ENCODE measurements at regions of chr12 and their contacts with region 1.

Region 1: DNA sequence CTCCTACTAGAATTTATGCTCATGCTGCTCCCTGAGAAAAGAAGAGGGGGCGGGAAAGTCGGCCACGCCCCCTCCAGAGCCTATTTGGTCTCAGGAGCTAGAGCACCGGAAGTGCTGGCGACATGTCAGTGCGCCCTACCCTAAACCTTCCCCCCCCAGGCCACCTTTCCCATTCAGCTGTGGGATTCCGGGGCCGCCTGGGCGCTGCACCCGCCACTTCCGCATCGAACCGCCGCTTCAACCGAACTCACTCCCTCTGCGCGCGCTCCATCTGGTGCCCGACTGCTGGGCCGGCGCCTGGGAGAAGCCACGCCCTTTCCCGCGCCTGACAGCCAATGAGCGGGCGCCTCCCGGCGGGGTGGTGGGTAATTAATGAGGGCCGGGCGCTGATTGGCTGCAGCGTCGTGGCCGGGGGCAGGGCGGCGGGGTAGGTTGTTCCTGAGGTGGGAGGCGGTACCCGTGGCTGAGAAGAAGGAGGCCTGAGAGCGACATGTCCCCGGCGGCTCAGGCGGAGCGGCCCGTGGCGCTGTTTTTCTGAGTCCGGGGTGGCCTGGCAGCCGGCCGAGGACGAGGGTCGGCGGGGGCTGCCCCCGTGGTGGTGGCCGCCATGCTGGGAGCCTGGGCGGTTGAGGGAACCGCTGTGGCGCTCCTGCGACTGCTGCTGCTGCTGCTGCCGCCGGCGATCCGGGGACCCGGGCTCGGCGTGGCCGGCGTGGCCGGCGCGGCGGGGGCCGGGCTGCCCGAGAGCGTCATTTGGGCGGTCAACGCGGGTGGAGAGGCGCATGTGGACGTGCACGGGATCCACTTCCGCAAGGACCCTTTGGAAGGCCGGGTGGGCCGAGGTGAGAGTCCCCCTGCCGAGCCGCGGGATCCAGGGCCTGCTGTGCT is at the start of gene MLEC:
- DNase-seq: peak; percentile 99
- ATAC-seq: peak; percentile 86
- H3K4me3 Mint-ChIP-seq: peak within 1 kb of the TSS; percentile 92
- H3K27ac Mint-ChIP-seq: peak within 1 kb of the TSS; percentile 85
- H3K4me1 Mint-ChIP-seq: peaks cover 46% of the 10 kb centered on the region
- H3K27me3 Mint-ChIP-seq: no peaks in the 10 kb centered on the region
- total RNA-seq, gene MLEC: 70.6 to 89.5 TPM

Region 2: DNA sequence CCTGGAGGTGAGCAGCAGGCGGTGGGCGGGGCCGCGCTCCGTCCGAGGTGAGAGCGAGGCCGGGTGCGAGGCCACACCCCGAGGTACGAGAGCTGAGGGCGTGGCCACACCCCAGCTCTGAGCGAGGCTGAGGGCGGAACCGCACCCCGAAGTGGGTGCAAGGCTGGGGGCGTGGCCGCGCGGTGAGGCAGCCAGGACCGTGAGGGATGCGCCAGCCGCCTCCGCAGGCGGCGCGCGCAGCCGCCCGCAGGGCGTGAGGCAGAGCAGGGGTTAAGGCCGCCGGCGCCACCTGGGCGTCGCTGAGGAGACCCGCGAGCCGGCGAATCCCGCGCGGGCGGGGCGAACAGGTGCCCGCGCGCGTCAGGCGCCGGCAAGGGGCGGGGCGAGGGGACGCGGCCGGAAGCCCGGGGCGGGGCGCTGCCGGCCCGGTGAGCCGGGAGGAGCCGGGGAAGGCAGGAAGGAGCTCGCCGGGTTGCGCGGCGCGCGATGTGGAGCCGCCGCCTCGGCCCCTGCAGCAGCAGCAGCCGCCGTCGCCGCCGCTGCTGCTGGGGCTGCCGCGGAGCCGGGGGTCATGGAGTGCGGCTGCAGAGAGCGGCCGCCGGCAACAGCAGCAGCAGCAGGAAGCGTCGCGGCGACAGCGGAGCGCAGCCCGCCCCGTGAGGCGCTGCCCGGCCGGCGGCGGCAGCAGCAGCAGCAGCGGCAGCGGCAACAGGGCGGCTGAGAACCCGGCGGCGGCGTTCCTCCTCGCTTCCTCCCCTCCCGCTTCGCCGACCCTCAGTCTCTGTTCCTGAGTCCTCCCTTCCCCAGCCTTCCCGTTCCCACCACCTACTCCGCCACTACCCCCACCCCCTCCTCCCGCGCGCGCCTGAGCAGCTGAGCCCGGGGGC is 697.9 kb before region 1 on chr12 and contains the start of gene BICDL1:
- CTCF ChIA-PET with region 1: no interaction called
- POLR2A ChIA-PET with region 1: no interaction called
- intact Hi-C with region 1: loop called in 1 of 2 experiments (anchors 5 kb)
- DNase-seq: peak; percentile 99
- ATAC-seq: peak; percentile 87
- H3K4me3 Mint-ChIP-seq: peak within 1 kb of the TSS; percentile 90
- H3K27ac Mint-ChIP-seq: peak within 1 kb of the TSS; percentile 92
- H3K4me1 Mint-ChIP-seq: peaks cover 46% of the 10 kb centered on the region
- H3K27me3 Mint-ChIP-seq: no peaks in the 10 kb centered on the region
- total RNA-seq, gene BICDL1: 106 to 132 TPM

Region 3: DNA sequence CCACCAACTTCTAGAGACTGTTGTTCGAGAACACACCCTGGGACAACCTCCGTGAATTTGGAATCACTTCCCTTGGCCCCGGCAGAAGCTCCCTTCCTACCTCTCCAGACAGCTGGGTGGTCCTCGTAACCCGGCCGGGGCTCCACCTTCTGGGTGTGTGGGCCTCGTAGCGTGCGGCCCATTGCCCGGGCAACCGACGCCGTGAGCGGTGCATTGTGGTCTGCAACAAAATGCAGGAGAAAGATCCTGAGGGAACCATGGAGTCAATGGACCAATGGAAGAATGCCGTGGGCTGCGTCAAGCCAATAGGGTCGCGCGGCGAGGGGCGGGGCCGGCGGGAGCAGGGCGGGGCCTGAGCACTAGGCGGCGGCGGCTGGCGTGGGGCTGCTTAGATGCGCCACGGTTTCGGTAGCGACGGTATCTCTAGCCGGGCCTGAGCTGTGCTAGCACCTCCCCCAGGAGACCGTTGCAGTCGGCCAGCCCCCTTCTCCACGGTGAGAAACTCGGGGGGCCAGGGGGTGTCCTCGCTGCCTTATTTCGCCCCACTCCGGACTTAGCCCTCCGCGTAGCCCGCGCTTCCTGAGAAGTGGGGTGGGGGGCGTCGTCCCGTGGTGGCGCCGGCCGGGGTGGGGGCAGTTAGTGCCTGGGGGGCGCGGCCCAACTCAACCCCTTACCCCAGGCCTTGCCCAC is 191.1 kb before region 1 on chr12 and contains the start of gene DYNLL1:
- CTCF ChIA-PET with region 1: no interaction called
- POLR2A ChIA-PET with region 1: no interaction called
- intact Hi-C with region 1: loop called in 1 of 2 experiments (anchors 1 kb)
- DNase-seq: peak; percentile 98
- ATAC-seq: peak; percentile 98
- H3K4me3 Mint-ChIP-seq: peak within 1 kb of the TSS; percentile 91
- H3K27ac Mint-ChIP-seq: peak within 1 kb of the TSS; percentile 75
- H3K4me1 Mint-ChIP-seq: peaks cover 31% of the 10 kb centered on the region
- H3K27me3 Mint-ChIP-seq: no peaks in the 10 kb centered on the region
- total RNA-seq, gene DYNLL1: 166 to 169 TPM

Region 4: GRCh38 chr12:120649442-120650232 is 37.3 kb before region 1 on chr12:
- CTCF ChIA-PET with region 1: interaction called, 5 read pairs
- POLR2A ChIA-PET with region 1: interaction called, 4 read pairs
- intact Hi-C with region 1: loop called (anchors 1 to 2 kb)
- DNase-seq: peak; percentile 35
- ATAC-seq: peak; percentile 8
- H3K4me3 Mint-ChIP-seq: peak overlapping the region; percentile 37
- H3K27ac Mint-ChIP-seq: no peak overlapping the region
- H3K4me1 Mint-ChIP-seq: peaks cover 15% of the 10 kb centered on the region
- H3K27me3 Mint-ChIP-seq: peaks cover 48% of the 10 kb centered on the region

Region 5: DNA sequence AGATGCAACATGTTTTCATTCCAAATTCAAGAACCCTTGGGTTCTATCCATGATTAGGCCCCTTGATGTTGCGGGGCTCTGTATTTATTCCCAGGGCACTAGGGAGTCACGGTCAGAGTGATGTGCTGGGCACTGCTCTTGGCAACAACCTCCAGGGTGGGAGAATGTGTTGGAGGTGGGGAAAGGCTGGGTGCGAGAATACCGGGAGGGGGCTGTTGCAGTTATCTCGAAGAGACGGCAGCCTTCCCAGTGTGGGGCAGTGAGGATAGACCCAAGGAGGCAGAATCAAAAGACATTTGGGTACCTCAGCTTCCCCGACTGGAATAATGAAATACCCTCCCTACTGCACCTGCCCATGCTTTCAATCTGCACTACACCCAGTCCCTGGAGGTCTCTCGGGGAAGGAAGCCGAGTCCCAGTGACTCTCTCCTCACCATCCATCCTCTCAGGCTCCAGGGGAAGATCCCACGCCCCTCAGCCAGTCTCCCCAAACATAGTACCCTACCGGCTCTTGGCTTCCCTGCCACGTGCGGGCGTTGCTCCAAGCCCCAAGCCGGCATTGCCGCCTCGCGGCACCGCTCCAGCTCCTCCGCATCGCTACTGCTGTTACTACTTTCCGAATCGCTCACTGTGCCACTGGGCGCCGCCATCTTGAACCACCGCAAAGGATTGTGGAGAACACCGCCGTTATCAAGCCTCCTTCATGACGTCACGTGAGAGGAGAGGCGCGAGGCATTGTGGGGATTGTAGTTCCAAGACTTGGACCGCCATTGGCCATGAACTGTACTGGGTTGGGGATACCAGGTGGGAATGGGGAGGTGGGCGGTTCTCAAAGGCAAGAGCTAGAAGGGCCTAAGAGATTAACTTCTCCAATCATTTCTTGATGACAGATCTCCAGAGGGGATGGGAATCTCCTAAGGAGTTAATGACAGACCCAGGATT is 329.2 kb after region 1 on chr12 and contains the start of gene C12orf43:
- CTCF ChIA-PET with region 1: no interaction called
- POLR2A ChIA-PET with region 1: no interaction called
- intact Hi-C with region 1: loop called in 1 of 2 experiments (anchors 1 kb)
- DNase-seq: peak; percentile 97
- ATAC-seq: peak; percentile 99
- H3K4me3 Mint-ChIP-seq: peak within 1 kb of the TSS; percentile 91
- H3K27ac Mint-ChIP-seq: peak within 1 kb of the TSS; percentile 92
- H3K4me1 Mint-ChIP-seq: peaks cover 16% of the 10 kb centered on the region
- H3K27me3 Mint-ChIP-seq: no peaks in the 10 kb centered on the region
- total RNA-seq, gene C12orf43: 22.8 to 23.8 TPM

Region 6: GRCh38 chr12:121296618-121297434 is 609.9 kb after region 1 on chr12 and contains the start of gene CAMKK2:
- CTCF ChIA-PET with region 1: no interaction called
- POLR2A ChIA-PET with region 1: no interaction called
- intact Hi-C with region 1: loop called in 1 of 2 experiments (anchors 2 kb)
- DNase-seq: peak; percentile 92
- ATAC-seq: peak; percentile 86
- H3K4me3 Mint-ChIP-seq: peak within 1 kb of the TSS; percentile 88
- H3K27ac Mint-ChIP-seq: peak within 1 kb of the TSS; percentile 80
- H3K4me1 Mint-ChIP-seq: peaks cover 20% of the 10 kb centered on the region
- H3K27me3 Mint-ChIP-seq: no peaks in the 10 kb centered on the region
- total RNA-seq, gene CAMKK2: 24.2 to 30.3 TPM

Measured in activated CD4-positive, alpha-beta T cell treated with anti-CD3 and anti-CD28 coated beads for 36 hours (primary cell).